Activated CD4-positive, alpha-beta memory T cell treated with anti-CD3 and anti-CD28 coated beads, Interleukin-2, amount 10 ng/mL, durations not matched to agents 7 days and 5 days (primary cell): ENCODE measurements at regions of chr19 and their contacts with region 1.

Region 1: DNA sequence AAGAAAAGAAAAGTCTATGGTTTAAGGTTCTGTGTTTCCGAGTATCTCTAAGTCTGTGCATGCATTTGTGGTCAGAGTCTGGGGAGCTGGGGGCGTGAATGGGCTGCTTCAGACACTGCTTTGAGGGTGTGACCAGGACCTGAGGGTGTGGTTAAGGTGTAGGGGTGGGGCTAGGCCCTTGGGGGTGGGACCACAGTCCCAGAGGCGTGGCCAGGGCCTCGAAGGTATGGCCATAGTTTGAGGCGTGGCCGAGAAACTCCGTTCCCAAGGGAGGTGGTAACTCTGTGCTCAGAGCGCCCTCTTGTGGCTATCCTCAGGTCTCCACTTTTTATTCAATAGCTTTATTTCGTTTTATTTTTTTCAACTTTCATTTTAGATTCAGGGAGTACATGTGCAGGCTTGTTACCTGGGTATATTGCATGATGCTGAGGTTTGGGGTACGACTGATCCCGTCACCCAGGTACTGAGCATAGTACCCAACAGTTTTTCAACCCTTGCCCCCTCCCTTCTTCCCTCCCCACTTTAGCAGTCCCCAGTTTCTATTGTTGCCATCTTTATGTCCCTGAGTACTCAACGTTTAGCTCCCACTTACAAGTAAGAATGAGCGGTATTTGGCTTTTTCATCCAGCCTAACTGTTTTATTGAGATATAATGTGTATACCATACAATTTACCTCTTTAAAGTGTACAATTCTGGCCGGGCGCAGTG is 7.0 kb upstream of the CBLC start:
- DNase-seq: peak; percentile 99
- H3K4me3 Mint-ChIP-seq: peak overlapping the region; percentile 48
- H3K27ac Mint-ChIP-seq: peak overlapping the region; percentile 58
- H3K4me1 Mint-ChIP-seq: peaks cover 40% of the 10 kb centered on the region
- H3K27me3 Mint-ChIP-seq: peaks cover 8% of the 10 kb centered on the region

Region 2: DNA sequence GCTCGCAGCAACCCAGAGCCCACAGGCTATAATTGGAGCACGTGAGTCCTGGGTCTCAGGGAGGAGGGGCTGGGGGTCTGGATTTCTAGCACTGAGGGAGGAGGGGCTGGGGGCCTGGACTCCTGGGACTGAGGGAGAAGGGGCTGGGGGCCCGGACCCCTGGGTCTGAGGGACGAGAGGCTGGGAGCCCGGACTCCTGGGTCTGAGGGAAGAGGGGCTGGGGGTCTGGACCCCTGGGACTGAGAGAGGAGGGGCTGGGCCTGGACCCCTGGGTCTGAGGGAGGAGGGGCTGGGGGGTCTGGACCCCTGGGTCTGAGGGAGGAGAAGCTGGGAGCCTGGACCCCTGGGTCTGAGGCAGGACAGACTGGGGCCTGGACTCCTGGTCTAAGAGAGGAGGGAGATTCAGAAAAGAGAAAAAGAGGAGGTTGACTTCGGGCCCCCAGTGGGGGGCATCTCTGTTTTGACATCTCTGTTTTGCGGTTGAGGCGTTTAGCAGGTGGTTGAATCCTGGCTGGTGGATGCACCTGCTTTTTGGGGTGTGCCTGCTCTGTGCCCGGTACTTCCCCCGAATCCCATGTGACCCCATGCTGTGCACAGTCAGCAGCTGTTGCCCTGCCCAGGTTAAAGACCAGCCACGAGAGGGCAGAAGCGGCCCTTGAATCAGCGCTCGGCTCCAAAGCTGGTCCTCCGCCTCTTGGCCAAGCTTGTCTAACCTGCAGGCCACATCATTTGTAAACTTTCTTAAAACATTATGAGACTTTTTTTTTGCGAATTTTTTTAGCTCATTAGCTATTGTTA is 116.5 kb before region 1 on chr19:
- CTCF ChIA-PET with region 1: interaction called, 39 read pairs
- POLR2A ChIA-PET with region 1: no interaction called
- DNase-seq: peak; percentile 80
- H3K4me3 Mint-ChIP-seq: no peak overlapping the region
- H3K27ac Mint-ChIP-seq: no peak overlapping the region
- H3K4me1 Mint-ChIP-seq: peaks cover 5% of the 10 kb centered on the region
- H3K27me3 Mint-ChIP-seq: no peaks in the 10 kb centered on the region

Region 3: DNA sequence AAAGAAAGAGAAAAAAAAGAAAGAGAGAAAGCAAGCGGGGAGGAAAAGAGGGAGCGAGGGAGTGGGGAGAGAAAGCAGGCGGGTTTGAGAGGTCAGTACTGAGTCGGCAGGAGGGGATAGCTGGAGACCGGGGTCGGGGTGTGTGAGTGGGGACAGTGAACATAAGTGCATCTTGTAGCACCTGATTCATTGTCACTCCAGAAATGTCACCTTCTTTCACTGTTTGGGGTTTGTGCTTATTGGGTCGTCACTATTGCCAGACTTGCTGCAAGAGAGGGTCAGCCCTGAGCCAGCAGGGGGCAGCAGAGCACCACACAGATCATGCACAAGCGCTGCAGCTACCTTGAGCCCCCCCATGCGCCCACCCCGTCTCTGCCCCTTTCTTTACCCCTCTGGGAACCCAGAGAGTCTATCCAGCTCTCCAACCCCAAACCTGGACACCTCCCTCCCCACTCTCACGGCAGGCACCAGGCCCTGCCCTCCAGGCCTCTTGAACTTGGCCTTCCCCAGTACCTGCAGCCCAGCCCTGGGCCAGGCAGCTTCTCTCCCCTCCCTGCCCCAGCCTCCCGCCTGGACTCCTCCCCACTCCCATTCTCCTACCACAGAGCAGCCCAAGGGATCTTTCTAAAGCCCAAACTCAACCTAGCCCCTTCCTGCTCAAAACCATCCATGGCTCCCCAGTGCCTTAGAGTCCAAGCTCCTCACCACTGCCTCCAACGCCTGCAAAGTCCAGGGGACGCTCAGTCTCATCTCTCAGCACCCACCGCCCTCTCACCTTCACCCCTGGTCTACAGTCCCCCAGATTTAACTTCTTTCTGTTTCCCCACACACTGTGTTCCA is 81.4 kb before region 1 on chr19:
- CTCF ChIA-PET with region 1: interaction called, 87 read pairs
- POLR2A ChIA-PET with region 1: interaction called, 10 read pairs
- DNase-seq: peak; percentile 77
- H3K4me3 Mint-ChIP-seq: no peak overlapping the region
- H3K27ac Mint-ChIP-seq: no peak overlapping the region
- H3K4me1 Mint-ChIP-seq: peaks cover 38% of the 10 kb centered on the region
- H3K27me3 Mint-ChIP-seq: peaks cover 29% of the 10 kb centered on the region

Region 4: GRCh38 chr19:44734986-44735385 is 35.7 kb before region 1 on chr19:
- CTCF ChIA-PET with region 1: interaction called, 26 read pairs
- POLR2A ChIA-PET with region 1: no interaction called
- DNase-seq: no peak
- H3K4me3 Mint-ChIP-seq: no peak overlapping the region
- H3K27ac Mint-ChIP-seq: no peak overlapping the region
- H3K4me1 Mint-ChIP-seq: peaks cover 22% of the 10 kb centered on the region
- H3K27me3 Mint-ChIP-seq: peaks cover 2% of the 10 kb centered on the region

Region 5: DNA sequence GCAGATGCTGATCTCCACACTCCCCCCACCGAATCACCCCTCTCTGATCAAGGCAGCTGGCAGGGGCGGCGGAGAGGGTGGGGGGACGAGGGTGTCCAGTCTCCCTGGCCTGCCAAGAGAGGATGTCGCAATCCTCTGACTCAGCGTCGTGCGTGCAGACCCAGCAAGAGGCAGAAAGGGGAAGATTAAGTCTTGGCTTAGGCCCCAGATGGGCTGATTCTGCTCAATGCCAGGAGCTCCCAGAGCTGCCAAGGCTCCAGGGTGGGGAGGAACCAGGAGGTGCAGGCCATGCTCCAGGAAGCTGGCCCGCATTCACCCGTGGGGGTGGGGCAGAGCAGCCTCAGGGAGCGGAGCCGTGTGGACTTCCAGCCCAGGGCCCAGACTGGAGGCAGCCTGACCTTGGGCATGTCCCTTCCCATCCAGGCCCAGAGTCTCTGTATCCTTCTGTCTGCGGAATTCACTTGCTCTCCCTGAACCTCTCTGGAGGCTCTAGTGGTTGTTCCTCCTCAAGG is 28.8 kb before region 1 on chr19:
- CTCF ChIA-PET with region 1: interaction called, 23 read pairs
- POLR2A ChIA-PET with region 1: no interaction called
- DNase-seq: peak; percentile 35
- H3K4me3 Mint-ChIP-seq: no peak overlapping the region
- H3K27ac Mint-ChIP-seq: peak overlapping the region; percentile 16
- H3K4me1 Mint-ChIP-seq: peaks cover 47% of the 10 kb centered on the region
- H3K27me3 Mint-ChIP-seq: peaks cover 4% of the 10 kb centered on the region

Region 6: DNA sequence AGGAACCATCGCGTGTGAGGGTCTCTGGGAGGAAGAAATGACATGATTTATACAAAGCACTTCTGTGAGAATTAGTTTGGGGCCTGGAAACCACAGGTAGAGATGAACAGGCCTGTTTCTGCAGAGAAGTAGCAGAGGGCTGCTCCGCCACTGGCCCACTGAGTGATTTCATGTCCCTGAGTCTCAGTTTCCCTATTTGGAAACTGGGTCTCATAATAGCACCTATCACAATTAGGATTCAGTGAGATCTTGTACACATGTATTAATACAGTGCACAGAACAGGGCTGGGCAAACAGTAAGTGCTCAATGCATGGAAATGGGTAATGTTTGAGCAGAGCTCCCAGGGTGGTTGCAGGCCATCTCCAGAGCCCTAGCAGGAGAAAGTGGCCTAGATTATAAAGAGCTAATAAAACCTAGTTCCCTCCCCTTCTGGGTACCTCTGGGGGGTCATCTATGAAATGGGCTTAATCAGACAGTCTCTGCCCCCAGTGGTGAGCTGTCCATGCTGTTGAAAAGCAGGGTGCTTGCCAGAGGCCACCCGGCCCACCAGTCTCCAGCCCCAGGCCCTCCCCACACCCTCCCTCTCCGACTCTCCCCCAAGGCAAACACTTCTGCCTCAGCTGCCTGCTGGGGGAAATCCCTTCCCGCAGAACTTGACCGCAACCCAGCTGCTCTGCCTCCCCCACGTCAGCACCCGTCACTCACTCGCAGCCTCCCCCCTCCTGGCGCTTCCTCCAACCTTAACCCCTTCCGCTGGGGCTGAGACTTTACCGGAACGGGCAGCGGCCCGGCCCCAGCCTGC is 17.7 kb before region 1 on chr19:
- CTCF ChIA-PET with region 1: interaction called, 25 read pairs
- POLR2A ChIA-PET with region 1: interaction called, 37 read pairs
- DNase-seq: peak; percentile 98
- H3K4me3 Mint-ChIP-seq: peak overlapping the region; percentile 87
- H3K27ac Mint-ChIP-seq: peak overlapping the region; percentile 97
- H3K4me1 Mint-ChIP-seq: peaks cover 70% of the 10 kb centered on the region
- H3K27me3 Mint-ChIP-seq: no peaks in the 10 kb centered on the region

Region 7: DNA sequence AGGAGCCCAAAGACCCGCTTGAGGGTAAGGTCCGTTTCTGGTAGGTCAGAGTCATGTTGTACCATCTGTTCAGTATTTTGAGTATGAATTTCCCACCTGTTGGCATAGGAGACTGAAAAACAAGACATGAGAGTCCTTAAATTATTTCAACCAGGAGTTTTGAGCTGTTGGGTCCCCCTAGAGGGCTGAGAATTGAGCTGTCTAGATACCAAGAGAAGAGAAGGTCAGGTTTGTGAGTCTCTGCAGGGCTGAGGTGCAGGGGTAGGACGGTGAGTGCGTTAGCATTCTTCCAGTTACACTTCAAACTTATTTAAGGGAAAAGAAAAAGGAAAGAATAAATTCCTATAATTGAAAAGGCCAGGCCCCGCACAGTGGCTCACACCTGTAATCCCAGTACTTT is 12.0 kb after region 1 on chr19:
- CTCF ChIA-PET with region 1: interaction called, 13 read pairs
- POLR2A ChIA-PET with region 1: no interaction called
- DNase-seq: no peak
- H3K4me3 Mint-ChIP-seq: no peak overlapping the region
- H3K27ac Mint-ChIP-seq: no peak overlapping the region
- H3K4me1 Mint-ChIP-seq: peaks cover 4% of the 10 kb centered on the region
- H3K27me3 Mint-ChIP-seq: no peaks in the 10 kb centered on the region

Region 8: DNA sequence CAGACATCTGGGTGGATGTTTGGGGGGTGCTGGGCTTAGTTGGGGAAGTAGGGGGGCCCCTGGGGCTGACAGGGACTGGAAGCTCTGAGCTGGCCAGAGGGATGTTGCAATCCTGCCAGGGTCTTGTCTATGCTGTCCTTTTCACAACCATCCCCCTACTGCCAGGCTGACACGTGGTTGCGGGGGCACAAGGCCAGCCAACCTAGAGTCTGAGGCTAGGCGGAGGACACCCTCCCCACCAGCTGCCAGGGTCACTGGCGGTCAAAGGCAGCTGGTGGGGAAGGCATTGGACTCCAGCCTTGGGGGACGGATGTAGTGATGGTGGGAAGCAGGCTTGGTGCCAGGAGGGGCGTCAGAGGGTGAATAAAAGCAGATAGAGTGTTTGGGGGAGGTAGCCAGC is 142.2 kb after region 1 on chr19:
- CTCF ChIA-PET with region 1: no interaction called
- POLR2A ChIA-PET with region 1: no interaction called
- DNase-seq: no peak
- H3K4me3 Mint-ChIP-seq: no peak overlapping the region
- H3K27ac Mint-ChIP-seq: no peak overlapping the region
- H3K4me1 Mint-ChIP-seq: peaks cover 14% of the 10 kb centered on the region
- H3K27me3 Mint-ChIP-seq: peaks cover 22% of the 10 kb centered on the region